ENCODE measurements at regions of chr1 and their contacts with region 1.

Region 1: DNA sequence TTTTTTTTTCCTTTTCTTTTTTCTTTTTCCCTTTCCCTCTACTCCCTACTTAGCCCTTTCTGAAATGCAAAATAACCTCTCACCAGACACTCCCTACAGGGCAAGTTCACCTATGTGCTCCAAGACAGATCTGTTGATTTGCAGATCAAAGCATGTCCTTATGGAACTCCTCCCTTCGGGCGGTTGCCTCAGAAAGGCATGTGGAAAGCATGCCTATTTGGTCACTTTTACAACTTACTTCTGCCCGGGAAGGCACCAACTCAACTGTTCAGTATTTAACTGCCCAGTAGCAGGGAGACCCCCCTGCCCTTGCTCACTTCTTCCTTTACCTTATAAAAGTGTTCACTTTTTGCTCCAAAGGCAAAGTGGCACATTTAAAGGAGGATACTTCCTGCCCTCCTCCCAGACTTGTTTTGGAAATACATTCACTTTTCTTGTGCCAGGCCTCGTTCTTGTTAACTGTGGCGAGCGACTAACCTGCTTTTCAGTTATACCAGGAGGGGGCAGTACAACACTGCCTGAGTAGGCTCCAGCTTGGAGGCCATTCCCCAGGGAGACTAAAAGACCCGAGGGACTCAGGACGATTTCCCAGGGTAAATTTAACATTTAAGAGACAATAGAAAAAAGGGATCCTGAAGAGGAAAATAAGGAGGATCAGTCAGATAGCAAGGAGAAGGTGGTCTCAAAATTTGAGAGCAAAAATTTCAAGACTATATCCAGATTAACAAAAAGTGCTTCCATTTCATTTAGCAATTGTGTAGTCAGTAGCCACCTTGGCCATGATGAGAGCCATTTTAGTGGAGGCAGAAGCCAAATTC is 12.3 kb upstream of the SLAMF7 start:
- DNase-seq: peak in 8 of 9 donors; percentile 57 to 80 (median 73)
- ATAC-seq: peak; percentile 97
- H3K4me3 ChIP-seq: no peak overlapping the region
- H3K4me3 Mint-ChIP-seq: no peak overlapping the region
- H3K27ac ChIP-seq: no peak overlapping the region
- H3K27ac Mint-ChIP-seq: no peak overlapping the region
- H3K4me1 ChIP-seq: peaks cover 15 to 21% of the 10 kb centered on the region in 2 donors
- H3K4me1 Mint-ChIP-seq: peaks cover 12 to 29% (median 16%) of the 10 kb centered on the region in 7 donors
- H3K27me3 ChIP-seq: no peaks in the 10 kb centered on the region
- H3K27me3 Mint-ChIP-seq: no peaks in the 10 kb centered on the region

Region 2: DNA sequence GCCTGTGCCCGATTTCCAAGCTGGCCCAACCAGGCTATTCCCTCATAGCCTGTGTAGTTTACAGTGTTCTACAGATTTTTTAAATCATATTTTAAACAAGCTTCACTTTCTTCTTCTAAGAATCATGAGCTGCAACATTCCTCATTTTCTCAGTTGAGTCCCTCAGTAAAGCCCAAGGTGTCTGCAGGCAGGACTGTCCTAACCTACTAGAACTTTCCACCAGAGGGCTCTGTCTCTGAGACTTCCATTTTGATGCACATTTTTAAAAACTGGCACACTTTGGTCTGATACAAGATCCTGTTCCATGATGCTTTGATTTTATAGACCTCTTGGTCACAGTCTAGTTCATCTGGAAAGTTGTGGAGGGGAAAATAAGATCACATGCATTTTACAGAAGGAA is 182.1 kb before region 1 on chr1:
- CTCF ChIA-PET with region 1: no interaction called
- POLR2A ChIA-PET with region 1: no interaction called
- intact Hi-C with region 1: no loop called
- DNase-seq: peak in 7 of 9 donors; percentile 27 to 60 (median 51)
- ATAC-seq: peak; percentile 45
- H3K4me3 ChIP-seq: no peak overlapping the region
- H3K4me3 Mint-ChIP-seq: peak overlapping the region in 1 of 10 donors; percentile 24
- H3K27ac ChIP-seq: no peak overlapping the region
- H3K27ac Mint-ChIP-seq: peak overlapping the region; percentile 9 to 86 (median 74)
- H3K4me1 ChIP-seq: peaks cover 38 to 43% of the 10 kb centered on the region in 2 donors
- H3K4me1 Mint-ChIP-seq: peaks cover 43 to 61% (median 56%) of the 10 kb centered on the region in 7 donors
- H3K27me3 ChIP-seq: no peaks in the 10 kb centered on the region
- H3K27me3 Mint-ChIP-seq: no peaks in the 10 kb centered on the region

Region 3: GRCh38 chr1:160830321-160831153 is 103.8 kb after region 1 on chr1:
- CTCF ChIA-PET with region 1: interaction called, 12 read pairs
- POLR2A ChIA-PET with region 1: no interaction called
- intact Hi-C with region 1: loop called (anchors 1 kb)
- DNase-seq: peak; percentile 51 to 77 (median 67)
- ATAC-seq: peak; percentile 75
- H3K4me3 ChIP-seq: no peak overlapping the region
- H3K4me3 Mint-ChIP-seq: no peak overlapping the region
- H3K27ac ChIP-seq: peak overlapping the region; percentile 10
- H3K27ac Mint-ChIP-seq: peak overlapping the region in 8 of 9 donors; percentile 68 to 96 (median 86)
- H3K4me1 ChIP-seq: peaks cover 6 to 18% of the 10 kb centered on the region in 2 donors
- H3K4me1 Mint-ChIP-seq: peaks cover 20 to 54% (median 36%) of the 10 kb centered on the region in 7 donors
- H3K27me3 ChIP-seq: no peaks in the 10 kb centered on the region
- H3K27me3 Mint-ChIP-seq: no peaks in the 10 kb centered on the region

Measured in naive thymus-derived CD4-positive, alpha-beta T cell (primary cell).